Esophagus muscularis mucosa (tissue), 4 donors: ENCODE measurements at regions of chr20 and their contacts with region 1.

Region 1: DNA sequence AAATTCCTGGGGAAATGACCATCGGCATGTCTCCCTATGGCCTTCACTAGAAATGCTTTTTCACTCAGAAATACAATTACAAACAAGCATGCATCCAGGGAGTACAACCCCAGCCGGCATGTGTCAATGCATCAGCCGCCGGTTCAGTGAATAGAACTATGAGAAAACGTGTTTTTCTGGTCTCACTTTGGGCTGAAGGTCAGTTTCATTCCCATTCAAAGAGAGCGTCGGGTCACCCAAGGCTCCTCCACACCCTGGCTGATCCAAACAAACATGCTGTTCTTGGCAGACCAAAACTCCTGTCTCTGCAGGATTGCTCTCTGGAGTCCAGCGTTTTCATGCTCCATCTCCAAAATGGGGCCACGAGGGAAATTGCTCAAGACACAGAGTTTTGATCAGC is 35.5 kb upstream of the NXT1 start:
- DNase-seq: no peak
- H3K4me3 ChIP-seq: no peak overlapping the region
- H3K27ac ChIP-seq: peak overlapping the region; percentile 54 to 69 (median 66)
- H3K4me1 ChIP-seq: peaks cover 0 to 16% (median 8%) of the 10 kb centered on the region in 4 donors
- H3K27me3 ChIP-seq: no peaks in the 10 kb centered on the region
- CTCF ChIP-seq: no peak
- EP300 ChIP-seq: no peak
- POLR2A ChIP-seq: no peak

Region 2: GRCh38 chr20:21702553-21703470 is 1612.3 kb before region 1 on chr20:
- intact Hi-C with region 1: loop called (anchors 10 kb)
- DNase-seq: no peak
- H3K4me3 ChIP-seq: peak overlapping the region; percentile 7 to 31 (median 20)
- H3K27ac ChIP-seq: no peak overlapping the region
- H3K4me1 ChIP-seq: peaks cover 9 to 45% (median 29%) of the 10 kb centered on the region in 4 donors
- H3K27me3 ChIP-seq: peaks cover 0 to 100% (median 42%) of the 10 kb centered on the region in 4 donors
- CTCF ChIP-seq: peak in 1 of 3 experiments; percentile 25
- EP300 ChIP-seq: no peak
- POLR2A ChIP-seq: no peak